Activated T-helper 1 cell treated with anti-CD3 and anti-CD28 coated beads, Interleukin-12 subunit alpha, Interleukin-12 subunit beta, Interleukin-2, Interleukin-4 antibody, amounts not matched to agents 30 ng/mL and 10 ng/mL and 1 ng/mL, durations not matched to agents 14 hours and 24 hours and 36 hours (primary cell): ENCODE measurements at regions of chr12 and their contacts with region 1.

Region 1: GRCh38 chr12:75480469-75480949 is at the start of gene GLIPR1:
- DNase-seq: peak; percentile 70
- H3K4me3 Mint-ChIP-seq: peak within 1 kb of the TSS; percentile 89
- H3K27ac Mint-ChIP-seq: peak within 1 kb of the TSS; percentile 98
- H3K4me1 Mint-ChIP-seq: peaks cover 83% of the 10 kb centered on the region
- H3K27me3 Mint-ChIP-seq: peaks cover 2% of the 10 kb centered on the region
- total RNA-seq, gene GLIPR1: 7.3 and 7.6 TPM in 2 replicates

Region 2: DNA sequence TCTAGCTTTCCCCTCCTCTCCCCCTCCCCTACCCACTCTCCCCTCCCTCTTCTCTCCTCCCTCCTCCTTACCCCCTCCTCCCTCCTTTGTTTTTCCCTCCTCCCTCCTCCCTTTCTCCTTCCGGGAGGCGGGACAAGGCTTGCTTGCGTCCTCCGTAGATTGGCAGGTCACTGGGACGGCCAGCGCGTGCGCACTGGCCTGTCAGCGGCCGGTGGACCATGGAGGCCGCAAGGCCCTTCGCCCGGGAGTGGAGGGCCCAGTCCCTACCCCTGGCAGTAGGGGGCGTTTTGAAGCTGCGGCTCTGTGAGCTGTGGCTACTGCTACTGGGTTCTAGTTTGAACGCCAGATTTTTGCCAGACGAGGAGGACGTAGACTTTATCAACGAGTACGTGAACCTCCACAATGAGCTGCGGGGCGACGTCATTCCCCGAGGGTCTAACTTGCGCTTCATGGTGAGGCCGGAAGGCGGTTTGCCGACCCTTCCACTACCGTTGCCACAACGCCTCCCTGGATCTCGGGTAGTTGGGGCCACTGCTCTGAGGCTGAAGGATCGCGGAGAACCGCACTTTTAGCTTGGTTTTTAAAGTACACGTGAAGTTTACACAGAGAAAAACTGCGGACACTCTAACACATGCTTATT is 89.5 kb before region 1 on chr12 and contains the start of gene GLIPR1L2:
- intact Hi-C with region 1: loop called (anchors 1 kb)
- DNase-seq: peak; percentile 82
- H3K4me3 Mint-ChIP-seq: peak within 1 kb of the TSS; percentile 86
- H3K27ac Mint-ChIP-seq: peak within 1 kb of the TSS; percentile 79
- H3K4me1 Mint-ChIP-seq: peaks cover 39% of the 10 kb centered on the region
- H3K27me3 Mint-ChIP-seq: peaks cover 5% of the 10 kb centered on the region
- total RNA-seq, gene GLIPR1L2: not detected in 2 replicates

Region 3: GRCh38 chr12:75641031-75641780 is 160.7 kb after region 1 on chr12:
- intact Hi-C with region 1: loop called (anchors 1 kb)
- DNase-seq: peak; percentile 32
- H3K4me3 Mint-ChIP-seq: peak overlapping the region; percentile 19
- H3K27ac Mint-ChIP-seq: peak overlapping the region; percentile 89
- H3K4me1 Mint-ChIP-seq: peaks cover 34% of the 10 kb centered on the region
- H3K27me3 Mint-ChIP-seq: no peaks in the 10 kb centered on the region

Region 4: GRCh38 chr12:75977952-75978671 is 497.6 kb after region 1 on chr12:
- intact Hi-C with region 1: loop called (anchors 1 kb)
- DNase-seq: peak; percentile 81
- H3K4me3 Mint-ChIP-seq: peak overlapping the region; percentile 38
- H3K27ac Mint-ChIP-seq: peak overlapping the region; percentile 94
- H3K4me1 Mint-ChIP-seq: peaks cover 77% of the 10 kb centered on the region
- H3K27me3 Mint-ChIP-seq: no peaks in the 10 kb centered on the region

Region 5: GRCh38 chr12:76158518-76159321 is 678.2 kb after region 1 on chr12:
- intact Hi-C with region 1: loop called (anchors 1 kb)
- DNase-seq: peak; percentile 67
- H3K4me3 Mint-ChIP-seq: peak overlapping the region; percentile 47
- H3K27ac Mint-ChIP-seq: peak overlapping the region; percentile 84
- H3K4me1 Mint-ChIP-seq: peaks cover 18% of the 10 kb centered on the region
- H3K27me3 Mint-ChIP-seq: peaks cover 27% of the 10 kb centered on the region

Region 6: GRCh38 chr12:76559400-76560085 is 1079.0 kb after region 1 on chr12 and contains the start of gene OSBPL8:
- intact Hi-C with region 1: loop called (anchors 1 kb)
- DNase-seq: peak; percentile 91
- H3K4me3 Mint-ChIP-seq: peak within 1 kb of the TSS; percentile 94
- H3K27ac Mint-ChIP-seq: peak within 1 kb of the TSS; percentile 98
- H3K4me1 Mint-ChIP-seq: peaks cover 49% of the 10 kb centered on the region
- H3K27me3 Mint-ChIP-seq: no peaks in the 10 kb centered on the region
- total RNA-seq, gene OSBPL8: 86.9 and 95.9 TPM in 2 replicates